ENCODE measurements at regions of chr19 and their contacts with region 1.

Region 1: GRCh38 chr19:40305403-40305802 is 20.3 kb upstream of the AKT2 start:
- H3K4me3 ChIP-seq: no peak overlapping the region
- H3K27ac ChIP-seq: no peak overlapping the region
- H3K4me1 ChIP-seq: peaks cover 13% of the 10 kb centered on the region
- CTCF ChIP-seq: peak; percentile 87; the same call in 1 of the 2 replicates

Region 2: GRCh38 chr19:40262422-40262821 is 43.0 kb before region 1 on chr19:
- CTCF ChIA-PET with region 1: no interaction called
- POLR2A ChIA-PET with region 1: no interaction called
- H3K4me3 ChIP-seq: no peak overlapping the region
- H3K27ac ChIP-seq: no peak overlapping the region
- H3K4me1 ChIP-seq: peaks cover 3% of the 10 kb centered on the region; the same call in 1 of the 2 replicates
- CTCF ChIP-seq: no peak

Region 3: GRCh38 chr19:40285353-40286234 is 19.8 kb before region 1 on chr19:
- CTCF ChIA-PET with region 1: interaction called, 59 read pairs
- POLR2A ChIA-PET with region 1: interaction called, 14 read pairs
- H3K4me3 ChIP-seq: peak overlapping the region; percentile 71
- H3K27ac ChIP-seq: peak overlapping the region; percentile 99
- H3K4me1 ChIP-seq: peaks cover 46% of the 10 kb centered on the region
- CTCF ChIP-seq: no peak

Region 4: DNA sequence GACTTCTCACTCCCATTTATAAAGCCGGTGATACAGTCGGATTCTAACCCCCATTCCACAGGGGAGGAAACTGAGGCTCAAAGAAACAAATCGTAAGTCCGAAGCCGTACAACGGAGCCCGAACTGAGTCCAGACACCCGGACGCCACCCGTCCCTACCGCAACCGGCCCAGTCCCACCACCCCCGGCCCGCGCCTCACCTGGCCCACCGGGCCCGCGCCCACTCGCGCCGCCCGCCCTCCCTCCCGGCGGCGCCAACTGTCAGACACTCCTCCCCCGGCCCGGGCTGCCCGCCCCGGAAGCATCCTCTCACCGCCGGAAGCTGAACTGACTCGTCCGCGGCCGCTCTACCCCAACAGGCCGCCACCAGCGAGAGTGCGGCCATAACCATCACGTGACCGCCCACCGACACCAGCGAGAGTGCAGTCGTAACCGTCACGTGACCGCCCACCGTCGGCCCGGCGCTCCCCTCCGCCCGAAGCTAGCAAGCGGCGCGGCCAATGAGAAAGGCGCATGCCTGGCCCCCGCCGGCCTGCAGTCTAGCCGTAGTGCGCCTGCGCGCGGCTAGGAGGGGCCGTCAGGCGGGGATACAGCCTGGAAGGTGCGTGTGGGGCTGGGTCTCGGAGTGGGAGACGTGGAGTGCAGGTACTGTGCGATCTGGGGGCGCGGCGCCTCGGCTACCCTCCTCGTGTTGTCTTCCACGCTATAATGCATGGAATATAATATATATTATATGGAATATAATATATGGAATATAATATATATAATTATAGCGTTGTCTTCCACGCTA is 42.9 kb after region 1 on chr19 and contains the starts of genes C19orf47 and PLD3:
- CTCF ChIA-PET with region 1: interaction called, 21 read pairs
- POLR2A ChIA-PET with region 1: interaction called, 12 read pairs
- H3K4me3 ChIP-seq: peak within 1 kb of the TSS; percentile 71
- H3K27ac ChIP-seq: peak within 1 kb of the TSS; percentile 73
- H3K4me1 ChIP-seq: peaks cover 8% of the 10 kb centered on the region
- CTCF ChIP-seq: peak; percentile 22; the same call in 1 of the 2 replicates

Region 5: GRCh38 chr19:40425450-40426287 is 120.3 kb after region 1 on chr19 and contains the start of gene SERTAD1:
- CTCF ChIA-PET with region 1: interaction called, 25 read pairs
- POLR2A ChIA-PET with region 1: interaction called, 13 read pairs
- H3K4me3 ChIP-seq: peak within 1 kb of the TSS; percentile 67
- H3K27ac ChIP-seq: peak within 1 kb of the TSS; percentile 97
- H3K4me1 ChIP-seq: peaks cover 19% of the 10 kb centered on the region
- CTCF ChIP-seq: peak; percentile 98

Region 6: GRCh38 chr19:40542202-40542859 is 236.9 kb after region 1 on chr19:
- CTCF ChIA-PET with region 1: interaction called, 16 read pairs
- POLR2A ChIA-PET with region 1: interaction called, 9 read pairs
- H3K4me3 ChIP-seq: no peak overlapping the region
- H3K27ac ChIP-seq: no peak overlapping the region
- H3K4me1 ChIP-seq: peaks cover 4% of the 10 kb centered on the region; the same call in 1 of the 2 replicates
- CTCF ChIP-seq: no peak

Region 7: DNA sequence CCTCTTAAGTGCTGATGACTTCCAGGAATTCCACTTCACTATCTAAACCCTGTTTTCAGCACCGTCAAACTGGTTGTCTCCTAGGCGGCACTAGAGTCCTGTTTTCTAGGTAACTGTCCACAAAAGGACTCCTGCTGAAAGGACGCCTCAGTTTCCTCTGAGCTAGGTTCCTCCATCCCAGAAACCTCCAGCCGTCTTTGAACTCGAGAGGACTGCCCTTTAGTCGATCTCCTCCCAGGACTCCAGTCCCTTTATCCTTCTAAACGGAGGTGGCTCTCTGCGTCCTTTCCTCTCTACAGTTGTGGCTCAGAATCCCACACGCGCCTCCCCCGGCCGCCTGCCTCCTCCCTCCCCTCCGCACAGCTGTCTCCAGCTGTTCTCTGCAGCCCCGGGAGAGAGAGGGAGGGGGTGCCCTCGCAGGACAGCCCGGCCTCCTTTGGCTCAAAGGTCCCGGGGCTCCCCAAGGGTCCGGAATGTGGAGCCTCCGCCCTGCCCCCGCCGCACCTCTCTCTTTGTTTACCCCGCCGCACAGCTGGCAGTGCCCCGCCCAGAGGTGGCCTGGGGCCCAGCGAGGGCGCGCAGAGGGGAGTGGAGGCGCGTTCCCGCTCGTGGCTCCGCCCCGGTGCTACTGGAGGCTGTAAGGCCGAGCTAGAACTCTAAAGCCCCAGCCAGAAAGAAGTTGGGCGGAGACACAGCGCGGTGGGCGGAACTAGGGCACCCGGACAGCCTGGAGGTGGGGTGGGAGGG is 298.2 kb after region 1 on chr19:
- CTCF ChIA-PET with region 1: interaction called, 19 read pairs
- POLR2A ChIA-PET with region 1: interaction called, 3 read pairs
- H3K4me3 ChIP-seq: peak overlapping the region; percentile 35
- H3K27ac ChIP-seq: peak overlapping the region; percentile 53
- H3K4me1 ChIP-seq: peaks cover 52% of the 10 kb centered on the region
- CTCF ChIP-seq: peak; percentile 58; the same call in 1 of the 2 replicates